ENCODE measurements at regions of chr4 and their contacts with region 1.

Region 1: DNA sequence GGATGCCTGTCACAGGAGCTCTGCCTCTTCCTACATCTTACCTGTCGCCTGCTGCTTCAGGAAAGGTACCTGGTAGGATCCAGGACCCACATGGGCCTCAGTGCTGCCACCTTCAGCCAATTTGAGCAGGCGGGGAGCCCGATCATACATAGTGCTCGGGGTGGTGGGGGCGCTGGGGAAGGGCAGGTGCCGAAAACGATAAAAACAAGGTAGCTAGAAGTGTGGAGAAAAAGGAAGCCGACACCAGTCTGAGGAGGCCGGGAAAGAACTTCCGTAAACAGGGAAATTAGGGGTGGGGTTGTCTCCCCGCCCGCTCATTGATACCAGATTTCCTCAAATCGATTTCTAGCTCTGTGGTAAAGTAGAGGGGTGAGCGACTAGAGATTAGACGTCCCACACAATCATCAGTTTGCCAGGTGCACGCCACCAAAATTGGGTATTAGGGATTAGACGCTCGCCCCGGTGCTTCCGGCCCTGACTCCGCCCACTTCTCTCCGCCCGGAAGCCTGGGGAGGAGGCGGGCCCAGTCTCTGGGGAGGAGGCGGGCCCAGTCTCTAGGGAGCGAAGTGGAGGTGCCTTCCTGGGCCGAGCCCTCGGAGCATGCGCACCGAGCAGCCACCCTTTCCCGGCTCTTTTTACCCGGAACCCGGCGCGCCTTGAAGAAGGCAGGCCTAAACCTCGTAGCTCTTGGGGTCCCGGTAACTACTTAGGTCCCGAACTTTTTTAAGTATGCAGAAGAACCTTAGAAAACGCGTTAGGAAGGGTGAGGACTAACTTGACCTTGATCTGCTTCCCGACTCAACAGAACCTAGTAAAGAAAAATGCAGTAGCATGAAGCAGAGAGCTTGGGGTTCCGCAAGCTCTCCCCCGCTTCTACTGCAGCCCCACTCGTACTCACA is at the start of gene STPG2:
- DNase-seq: peak; percentile 95
- H3K4me3 Mint-ChIP-seq: peak within 1 kb of the TSS; percentile 96
- H3K27ac Mint-ChIP-seq: peak within 1 kb of the TSS; percentile 99
- H3K4me1 Mint-ChIP-seq: peaks cover 19% of the 10 kb centered on the region
- H3K27me3 Mint-ChIP-seq: no peaks in the 10 kb centered on the region
- total RNA-seq, gene STPG2: not detected

Region 2: GRCh38 chr4:98166025-98166730 is 22.9 kb after region 1 on chr4:
- CTCF ChIA-PET with region 1: no interaction called
- intact Hi-C with region 1: no loop called
- DNase-seq: no peak
- H3K4me3 Mint-ChIP-seq: no peak overlapping the region
- H3K27ac Mint-ChIP-seq: no peak overlapping the region
- H3K4me1 Mint-ChIP-seq: no peaks in the 10 kb centered on the region
- H3K27me3 Mint-ChIP-seq: no peaks in the 10 kb centered on the region

Region 3: DNA sequence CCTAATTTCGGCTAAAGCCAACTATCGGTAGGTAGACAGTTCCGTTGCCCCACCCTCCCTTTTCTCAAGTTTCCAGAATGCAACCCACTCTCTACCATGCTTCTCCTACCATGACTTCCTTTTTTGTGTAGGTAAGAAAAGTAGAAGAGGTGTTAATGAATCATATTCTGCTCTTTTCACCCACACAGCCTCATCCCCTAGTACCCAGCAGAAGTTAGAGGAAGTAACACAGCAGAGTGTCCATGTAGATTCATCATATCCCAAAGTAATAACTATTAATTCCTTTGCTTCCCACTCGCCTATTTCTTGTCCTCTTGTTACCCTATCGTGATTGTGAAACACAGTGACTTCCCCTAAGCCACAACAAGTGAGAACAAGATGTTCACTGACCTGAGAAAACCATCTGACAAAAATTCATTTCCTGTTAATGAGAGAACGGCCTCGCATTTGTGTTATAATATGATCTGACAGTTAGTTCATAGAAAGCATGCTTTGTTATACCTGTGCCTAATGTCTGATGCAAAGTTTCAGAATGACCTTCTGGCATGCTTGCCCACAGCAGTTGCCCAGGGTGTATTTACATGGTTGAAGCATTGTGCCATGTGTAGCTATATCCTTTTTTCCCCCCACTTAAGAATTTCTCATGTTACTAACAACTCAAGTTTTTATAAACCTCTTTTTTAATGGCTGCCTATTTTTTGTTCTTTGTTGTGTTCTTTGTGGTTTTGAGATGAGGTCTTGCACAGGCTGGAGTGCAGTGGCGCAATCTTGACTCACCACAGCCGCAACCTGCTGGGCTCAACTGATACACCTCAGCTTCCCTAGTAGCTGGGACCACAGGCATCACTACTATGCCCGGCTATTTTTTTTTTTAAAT is 303.5 kb after region 1 on chr4:
- CTCF ChIA-PET with region 1: no interaction called
- intact Hi-C with region 1: loop called (anchors 1 kb)
- DNase-seq: peak; percentile 72
- H3K4me3 Mint-ChIP-seq: peak overlapping the region; percentile 48
- H3K27ac Mint-ChIP-seq: peak overlapping the region; percentile 76
- H3K4me1 Mint-ChIP-seq: peaks cover 31% of the 10 kb centered on the region
- H3K27me3 Mint-ChIP-seq: no peaks in the 10 kb centered on the region

Region 4: DNA sequence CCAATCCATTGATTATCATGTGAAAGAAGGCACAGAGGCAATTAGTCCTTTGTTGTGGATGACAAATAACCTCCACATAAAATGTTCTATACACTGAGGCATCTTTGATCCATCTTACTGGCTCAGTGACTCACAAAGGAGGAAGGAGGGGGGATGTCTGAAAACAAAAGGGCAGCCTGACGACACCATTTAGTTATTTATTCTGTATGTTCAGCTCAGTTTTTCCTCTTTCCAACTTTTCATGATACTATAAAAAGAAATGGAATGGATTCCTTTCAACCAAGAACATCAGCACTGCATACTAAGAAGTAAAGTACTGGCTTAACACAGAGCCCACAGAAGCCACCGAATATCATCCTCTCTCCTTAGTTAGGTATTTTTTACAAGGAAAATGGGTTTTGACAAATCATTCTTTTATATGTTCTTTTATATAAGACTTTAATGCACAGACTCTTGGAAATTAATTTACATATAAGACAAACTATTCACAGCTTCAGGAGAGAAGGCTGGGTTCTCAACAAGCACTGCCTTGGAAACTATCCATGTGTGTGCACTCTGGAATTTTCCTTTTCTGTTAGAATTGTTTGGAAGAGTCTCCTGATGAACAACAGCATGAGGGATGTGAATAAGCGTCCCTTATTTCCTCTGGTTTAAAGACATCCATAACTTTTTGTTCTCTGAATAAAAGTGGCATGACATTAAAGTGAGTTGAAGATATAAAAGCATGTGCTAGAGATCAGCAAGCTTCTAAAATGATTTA is 379.6 kb after region 1 on chr4:
- CTCF ChIA-PET with region 1: no interaction called
- intact Hi-C with region 1: loop called (anchors 1 kb)
- DNase-seq: peak; percentile 35
- H3K4me3 Mint-ChIP-seq: no peak overlapping the region
- H3K27ac Mint-ChIP-seq: peak overlapping the region; percentile 14
- H3K4me1 Mint-ChIP-seq: peaks cover 49% of the 10 kb centered on the region
- H3K27me3 Mint-ChIP-seq: no peaks in the 10 kb centered on the region

Region 5: DNA sequence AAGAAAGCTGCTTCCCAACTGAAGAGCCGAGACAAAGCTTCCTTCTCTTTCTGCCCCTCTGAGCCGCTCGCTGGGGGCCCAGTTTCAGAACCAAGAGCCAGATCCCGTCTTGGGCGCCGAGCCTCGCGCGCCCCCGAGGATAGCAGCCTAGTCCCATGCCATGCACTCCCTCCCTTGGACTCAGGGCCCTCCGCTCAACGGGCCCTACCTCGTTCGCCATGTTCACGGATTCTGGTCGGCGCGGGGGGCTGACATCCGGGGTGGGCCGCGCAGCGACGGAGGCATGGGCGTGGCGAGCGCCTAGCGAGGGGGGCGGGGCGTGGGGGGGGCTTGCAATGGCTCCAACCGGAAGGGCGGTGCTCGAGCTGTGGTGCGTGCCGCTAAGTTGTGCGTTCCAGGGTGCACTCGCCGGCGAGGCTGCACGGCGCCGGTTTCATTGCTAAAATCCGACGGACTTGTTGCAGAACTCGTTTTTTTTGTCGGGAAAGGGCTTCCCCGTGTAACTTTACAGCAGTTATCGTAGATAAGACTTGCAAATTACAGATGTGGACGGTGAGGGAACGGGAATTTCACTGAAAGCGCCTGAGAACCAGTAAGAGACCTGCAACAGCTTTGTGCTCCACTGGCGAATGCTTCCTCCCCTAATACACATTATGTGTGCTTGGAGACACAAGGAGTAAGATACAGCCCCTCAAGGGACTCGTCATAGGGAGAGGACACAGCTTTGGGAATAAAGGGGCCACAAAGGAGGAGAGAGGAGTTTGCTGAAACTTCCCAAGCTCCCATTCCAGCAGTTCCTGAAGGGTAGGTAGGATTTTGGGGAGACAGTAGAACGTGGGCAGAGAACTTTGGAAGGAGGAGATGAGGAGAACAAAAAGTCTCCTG is 945.5 kb after region 1 on chr4 and contains the start of gene ADH5:
- CTCF ChIA-PET with region 1: interaction called, 3 read pairs
- intact Hi-C with region 1: loop called (anchors 1 kb)
- DNase-seq: peak; percentile 92
- H3K4me3 Mint-ChIP-seq: peak within 1 kb of the TSS; percentile 96
- H3K27ac Mint-ChIP-seq: peak within 1 kb of the TSS; percentile 95
- H3K4me1 Mint-ChIP-seq: peaks cover 32% of the 10 kb centered on the region
- H3K27me3 Mint-ChIP-seq: no peaks in the 10 kb centered on the region
- total RNA-seq, gene ADH5: 94.3 to 99.9 TPM